ENCODE measurements at regions of chr22 and their contacts with region 1.

Region 1: DNA sequence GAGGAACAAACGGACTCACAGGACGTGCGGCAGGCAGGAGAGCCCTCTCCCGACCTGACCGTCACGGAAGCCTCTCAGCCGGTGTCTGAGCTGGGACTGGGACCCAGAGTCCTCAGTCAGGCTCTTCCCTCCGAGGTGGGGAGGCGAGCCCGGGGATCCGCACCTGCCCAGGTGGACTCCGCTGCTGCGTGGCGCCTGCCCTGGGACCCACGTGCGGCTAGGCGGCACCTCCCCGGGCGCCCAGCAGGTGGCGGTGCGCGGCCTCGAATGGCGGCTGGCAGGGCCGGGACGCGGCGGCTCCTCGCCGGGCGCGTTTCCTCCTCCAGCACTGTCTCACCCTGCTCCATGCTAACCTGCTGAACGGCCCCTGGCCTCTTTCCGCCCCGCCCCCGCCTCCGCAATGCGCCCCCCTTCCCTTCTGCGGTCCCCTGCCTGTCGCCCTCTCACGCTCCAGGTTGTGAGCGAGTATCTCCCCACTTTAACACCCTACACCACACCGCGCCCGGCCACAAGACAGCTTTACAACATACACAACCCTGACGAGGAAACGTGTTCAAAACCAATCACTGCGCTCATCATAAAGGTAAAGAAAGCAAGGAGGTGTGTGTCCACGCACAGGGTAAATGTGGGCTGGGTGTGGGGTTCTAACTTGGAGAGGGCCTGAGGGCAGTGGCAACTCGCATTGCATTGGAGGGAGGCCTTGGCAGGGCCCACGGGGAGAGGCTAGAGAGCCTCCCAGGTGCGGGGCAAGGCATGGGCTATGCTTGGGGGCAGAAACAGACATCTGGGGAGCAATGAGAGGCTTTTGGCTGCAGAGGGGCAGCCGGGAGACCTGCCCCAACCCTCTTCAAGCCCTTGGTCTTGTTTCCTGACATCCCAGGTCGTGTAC is 25.9 kb upstream of the ATXN10 start:
- DNase-seq: peak; percentile 82
- H3K4me3 Mint-ChIP-seq: no peak overlapping the region
- H3K27ac Mint-ChIP-seq: no peak overlapping the region
- H3K4me1 Mint-ChIP-seq: peaks cover 41% of the 10 kb centered on the region
- H3K27me3 Mint-ChIP-seq: peaks cover 33% of the 10 kb centered on the region

Region 2: DNA sequence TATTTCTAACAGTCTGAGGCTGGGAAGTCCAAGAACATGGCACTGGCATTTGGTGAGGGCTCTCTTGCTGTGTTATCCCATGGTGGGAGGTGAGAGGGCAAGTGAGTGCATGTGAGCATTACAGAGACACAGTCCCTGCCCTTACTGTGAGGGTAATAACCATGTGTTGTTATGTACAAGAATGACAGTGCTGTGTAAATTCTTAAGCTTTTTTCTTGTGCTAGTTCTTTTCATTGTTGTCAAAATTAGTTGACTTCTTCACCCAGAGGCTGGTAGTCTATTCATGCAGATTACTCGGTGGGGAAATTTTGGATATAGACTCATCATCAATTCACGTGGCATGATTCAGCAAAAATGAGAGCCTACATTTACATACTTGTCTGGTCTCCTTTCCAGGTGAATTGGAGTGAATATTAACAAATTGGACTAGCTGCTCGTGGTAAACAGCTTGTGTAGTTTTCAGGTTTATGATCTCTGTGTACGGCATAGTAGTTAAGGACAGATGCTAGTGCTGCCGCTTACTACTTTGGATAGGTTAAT is 75.1 kb after region 1 on chr22:
- CTCF ChIA-PET with region 1: no interaction called
- POLR2A ChIA-PET with region 1: no interaction called
- DNase-seq: no peak
- H3K4me3 Mint-ChIP-seq: no peak overlapping the region
- H3K27ac Mint-ChIP-seq: no peak overlapping the region
- H3K4me1 Mint-ChIP-seq: peaks cover 12% of the 10 kb centered on the region
- H3K27me3 Mint-ChIP-seq: no peaks in the 10 kb centered on the region

Region 3: GRCh38 chr22:45731798-45732495 is 86.2 kb after region 1 on chr22:
- CTCF ChIA-PET with region 1: no interaction called
- POLR2A ChIA-PET with region 1: no interaction called
- DNase-seq: no peak
- H3K4me3 Mint-ChIP-seq: no peak overlapping the region
- H3K27ac Mint-ChIP-seq: no peak overlapping the region
- H3K4me1 Mint-ChIP-seq: peaks cover 5% of the 10 kb centered on the region
- H3K27me3 Mint-ChIP-seq: no peaks in the 10 kb centered on the region

Region 4: DNA sequence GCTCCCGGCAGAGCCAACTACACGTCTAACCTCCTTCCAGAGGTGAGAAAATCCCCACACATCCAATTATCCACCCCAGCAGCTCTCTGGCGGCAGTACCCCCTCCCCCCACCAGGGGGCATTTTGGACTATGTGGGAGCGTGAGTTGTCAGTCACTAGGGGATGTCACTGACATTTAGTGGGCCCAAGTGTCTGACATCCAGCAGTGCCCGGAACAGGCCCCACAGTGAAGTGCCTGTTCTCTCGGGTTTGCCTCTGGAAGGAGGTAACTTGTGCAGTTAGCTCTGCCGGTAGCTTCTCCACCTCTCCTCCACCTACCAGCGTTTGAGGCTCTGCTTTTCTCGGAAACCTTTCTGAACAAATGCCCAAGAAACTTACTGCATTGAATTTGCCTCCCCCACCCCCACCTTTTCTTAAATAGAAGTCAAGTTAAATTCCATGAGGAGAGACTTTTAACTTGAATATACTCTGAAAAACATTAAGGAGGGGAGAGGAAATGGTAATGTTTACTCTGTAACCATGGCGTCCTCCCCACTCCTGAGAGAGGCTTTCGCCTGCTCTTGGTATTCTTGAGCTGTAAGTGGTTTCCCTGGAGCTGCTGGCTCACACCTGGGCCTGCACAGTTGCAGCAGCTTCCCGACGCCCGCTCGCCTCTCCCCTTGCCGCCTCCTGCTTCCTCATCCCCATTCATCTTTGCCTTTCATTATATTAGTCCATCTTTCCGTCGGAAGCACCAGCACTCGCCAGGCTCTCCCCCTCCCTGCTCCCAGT is 218.4 kb after region 1 on chr22:
- CTCF ChIA-PET with region 1: interaction called, 11 read pairs
- POLR2A ChIA-PET with region 1: no interaction called
- DNase-seq: peak; percentile 73
- H3K4me3 Mint-ChIP-seq: no peak overlapping the region
- H3K27ac Mint-ChIP-seq: no peak overlapping the region
- H3K4me1 Mint-ChIP-seq: no peaks in the 10 kb centered on the region
- H3K27me3 Mint-ChIP-seq: peaks cover 32% of the 10 kb centered on the region